Colonic mucosa (tissue), 4 donors: ENCODE measurements at regions of chr9 and their contacts with region 1.

Region 1: DNA sequence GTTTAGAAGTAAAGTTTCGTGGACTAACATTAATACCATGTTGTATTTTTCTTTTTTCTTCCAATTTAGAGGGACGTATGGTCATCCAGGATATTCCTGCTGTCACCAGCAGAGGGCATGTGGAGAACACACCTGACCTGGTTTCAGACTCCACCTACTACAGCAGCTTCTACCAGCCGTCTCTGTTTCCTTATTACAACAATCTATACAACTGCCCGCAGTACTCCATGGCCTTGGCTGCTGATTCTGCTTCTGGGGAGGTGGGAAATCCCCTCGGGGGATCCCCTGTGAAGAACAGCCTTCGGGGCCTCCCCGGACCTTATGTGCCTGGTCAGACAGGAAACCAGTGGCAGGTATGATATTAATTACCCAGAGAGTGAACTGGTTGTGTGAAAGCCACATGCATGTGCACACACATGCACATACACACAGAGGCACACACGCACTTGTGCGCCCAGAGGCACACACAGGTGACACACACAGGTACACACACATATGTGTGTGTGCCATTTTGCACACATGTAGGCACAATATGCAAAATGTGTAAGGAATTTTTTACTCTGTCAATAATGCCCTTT is 52.4 kb downstream of the DMRT1 start:
- DNase-seq: peak; percentile 66
- H3K4me3 ChIP-seq: no peak overlapping the region
- H3K27ac ChIP-seq: no peak overlapping the region
- H3K4me1 ChIP-seq: no peaks in the 10 kb centered on the region
- H3K27me3 ChIP-seq: no peaks in the 10 kb centered on the region
- CTCF ChIP-seq: peak; percentile 71

Region 2: GRCh38 chr9:1009101-1009707 is 115.3 kb after region 1 on chr9:
- intact Hi-C with region 1: loop called (anchors 5 kb)
- DNase-seq: peak; percentile 86
- H3K4me3 ChIP-seq: no peak overlapping the region
- H3K27ac ChIP-seq: no peak overlapping the region
- H3K4me1 ChIP-seq: no peaks in the 10 kb centered on the region
- H3K27me3 ChIP-seq: no peaks in the 10 kb centered on the region
- CTCF ChIP-seq: peak; percentile 97